ENCODE measurements at regions of chr6 and their contacts with region 1.

Region 1: GRCh38 chr6:112180095-112180820 is 74.1 kb downstream of the LAMA4 start:
- DNase-seq: peak in 1 of 2 donors; percentile 25
- ATAC-seq: peak in 1 of 2 donors; percentile 66
- H3K4me3 ChIP-seq: no peak overlapping the region
- H3K27ac ChIP-seq: no peak overlapping the region
- H3K4me1 ChIP-seq: no peaks in the 10 kb centered on the region
- H3K27me3 ChIP-seq: no peaks in the 10 kb centered on the region
- CTCF ChIP-seq: peak; percentile 59 to 71 (median 66)
- POLR2A ChIP-seq: no peak

Region 2: DNA sequence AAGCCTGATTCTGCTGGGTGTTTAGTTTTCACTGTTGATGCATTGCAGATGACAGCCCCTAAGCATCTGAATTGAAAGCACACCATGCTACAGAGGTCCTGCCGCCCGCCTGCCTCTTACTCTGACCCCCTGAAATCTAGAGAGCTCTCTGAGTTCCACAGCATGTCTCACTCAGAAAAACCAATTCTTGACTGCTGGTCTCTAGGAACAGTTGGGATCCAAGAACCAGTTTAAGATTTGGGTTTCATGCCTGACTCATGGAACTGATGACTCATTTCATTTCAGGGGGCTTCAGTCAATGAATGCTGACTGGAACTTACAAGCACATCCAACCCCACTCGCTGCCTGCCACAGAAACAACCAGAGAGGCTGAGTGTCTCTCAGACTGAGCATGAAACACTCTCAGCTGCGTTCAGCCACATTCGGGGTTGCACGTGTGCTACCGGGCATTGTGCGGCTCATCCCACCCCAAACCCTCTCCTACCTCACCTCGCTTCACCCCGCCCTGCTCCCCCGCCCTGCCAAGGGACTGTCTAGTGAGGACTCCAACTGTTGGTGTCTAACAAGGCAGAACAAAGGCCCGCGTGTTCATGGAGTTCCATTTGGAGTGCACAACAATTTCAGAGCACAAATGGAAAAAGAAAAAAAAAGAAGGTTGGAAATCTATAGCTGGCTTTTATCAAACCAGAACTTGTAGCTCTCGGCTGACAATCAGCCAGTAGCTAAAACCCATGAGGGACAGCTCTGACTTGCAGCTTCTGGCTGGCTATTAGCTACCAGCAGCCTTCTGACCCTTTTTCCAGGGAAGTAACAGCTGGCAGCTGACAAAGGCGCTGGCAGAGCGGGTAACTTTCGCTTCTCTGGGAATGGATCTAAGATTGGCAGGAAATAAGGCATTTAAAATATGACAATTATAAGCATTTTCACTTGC is 554.5 kb before region 1 on chr6:
- in situ Hi-C with region 1: no loop called
- intact Hi-C with region 1: no loop called
- DNase-seq: peak; percentile 55 to 76
- ATAC-seq: peak; percentile 87 to 94
- H3K4me3 ChIP-seq: peak overlapping the region; percentile 40 to 52 (median 48)
- H3K27ac ChIP-seq: peak overlapping the region; percentile 70 to 77 (median 74)
- H3K4me1 ChIP-seq: peaks cover 19 to 38% of the 10 kb centered on the region in 2 donors
- H3K27me3 ChIP-seq: no peaks in the 10 kb centered on the region
- CTCF ChIP-seq: no peak
- POLR2A ChIP-seq: no peak

Region 3: DNA sequence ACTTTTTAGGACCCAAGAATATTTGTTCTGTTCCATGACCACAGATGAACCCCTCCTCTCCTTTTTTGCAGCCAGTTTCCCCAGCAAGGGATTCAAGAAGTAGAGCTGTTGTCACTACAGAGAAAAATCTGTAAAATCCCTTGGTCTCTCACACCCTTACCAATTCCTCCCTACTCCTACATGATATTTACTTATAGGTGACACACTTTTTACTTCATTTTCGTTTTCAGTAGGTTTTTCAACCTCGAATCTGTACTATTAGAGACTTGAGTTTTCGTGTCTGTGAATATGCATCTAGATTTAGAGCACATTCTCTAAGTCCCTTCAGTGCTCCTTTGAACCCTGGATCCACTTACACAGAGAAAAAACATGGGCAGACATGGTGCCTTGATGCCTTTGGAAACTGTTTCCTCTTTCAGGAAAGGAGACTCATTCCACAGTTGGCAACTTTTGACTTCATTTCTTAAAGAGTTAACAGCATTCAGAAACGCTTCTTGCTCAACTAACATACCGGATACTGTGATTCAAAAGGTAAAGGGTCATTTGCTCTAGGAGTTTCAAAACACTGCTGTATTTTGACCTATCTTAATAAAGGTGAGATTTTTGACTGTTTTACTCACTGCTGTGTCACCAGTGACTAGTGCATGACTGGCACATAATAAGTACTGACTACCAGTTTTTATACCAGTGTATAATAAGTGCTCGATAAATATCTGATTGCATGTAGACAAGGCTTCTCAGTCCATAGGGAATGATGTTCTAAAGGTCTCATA is 23.5 kb after region 1 on chr6:
- in situ Hi-C with region 1: no loop called
- intact Hi-C with region 1: no loop called
- DNase-seq: no peak
- ATAC-seq: peak in 1 of 2 donors; percentile 51
- H3K4me3 ChIP-seq: no peak overlapping the region
- H3K27ac ChIP-seq: peak overlapping the region; percentile 41 to 56 (median 48)
- H3K4me1 ChIP-seq: peaks cover 0 to 7% of the 10 kb centered on the region in 2 donors
- H3K27me3 ChIP-seq: no peaks in the 10 kb centered on the region
- CTCF ChIP-seq: no peak
- POLR2A ChIP-seq: no peak

Region 4: DNA sequence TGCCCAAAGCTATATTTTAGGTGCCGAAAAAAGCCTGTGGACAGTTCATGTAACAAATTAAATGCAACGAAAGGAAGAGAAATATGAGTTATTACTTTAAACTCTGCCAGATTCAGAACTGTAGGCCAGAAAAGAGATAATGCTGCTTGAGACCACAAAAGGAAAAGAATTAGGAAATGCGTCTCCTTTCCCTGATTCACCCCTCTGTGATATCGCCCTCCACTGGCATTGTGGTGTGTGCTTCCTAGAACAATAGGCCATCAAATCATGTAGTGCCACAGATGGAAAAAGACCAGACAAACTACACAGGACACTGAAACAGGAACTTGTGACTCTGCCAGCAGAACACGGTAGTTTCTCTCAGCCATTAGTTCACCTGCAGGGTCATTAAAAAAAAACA is 88.9 kb after region 1 on chr6:
- in situ Hi-C with region 1: no loop called
- intact Hi-C with region 1: loop called (anchors 5 kb)
- DNase-seq: no peak
- ATAC-seq: peak in 1 of 2 donors; percentile 46
- H3K4me3 ChIP-seq: no peak overlapping the region
- H3K27ac ChIP-seq: peak overlapping the region; percentile 45 to 63 (median 52)
- H3K4me1 ChIP-seq: peaks cover 0 to 14% of the 10 kb centered on the region in 2 donors
- H3K27me3 ChIP-seq: no peaks in the 10 kb centered on the region
- CTCF ChIP-seq: peak in 1 of 5 experiments; percentile 24
- POLR2A ChIP-seq: no peak

Region 5: DNA sequence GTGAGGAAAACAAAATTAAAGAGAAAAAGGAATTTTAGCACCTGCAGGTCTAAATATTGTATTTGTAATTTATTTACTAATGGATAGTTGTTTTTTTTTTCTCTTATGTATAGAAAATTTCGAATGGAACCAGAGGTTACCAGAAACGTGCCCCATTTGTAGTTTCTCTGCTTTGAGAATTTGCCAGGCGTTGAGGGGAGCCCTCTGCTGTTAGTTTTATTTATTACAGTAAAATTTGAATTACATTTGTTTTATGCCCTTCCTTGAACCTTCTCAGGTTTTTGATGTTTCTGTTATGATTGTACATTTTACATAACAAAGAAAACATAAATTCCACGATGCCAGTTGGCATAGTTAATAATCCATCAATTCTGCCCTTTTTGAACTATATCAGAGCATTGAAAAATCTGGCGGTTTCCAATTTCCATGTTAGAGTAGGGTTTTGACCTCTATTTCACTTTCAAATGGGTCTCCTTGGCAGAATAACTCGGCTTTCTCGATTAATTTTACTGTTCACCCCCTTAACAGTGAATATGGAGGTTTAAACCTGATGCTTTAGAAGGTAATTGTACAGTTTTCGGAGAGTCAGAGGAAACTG is 131.8 kb after region 1 on chr6:
- in situ Hi-C with region 1: loop called (anchors 5 to 10 kb)
- intact Hi-C with region 1: loop called (anchors 1 kb)
- DNase-seq: no peak
- ATAC-seq: no peak
- H3K4me3 ChIP-seq: peak overlapping the region in 1 of 4 donors; percentile 10
- H3K27ac ChIP-seq: no peak overlapping the region
- H3K4me1 ChIP-seq: no peaks in the 10 kb centered on the region
- H3K27me3 ChIP-seq: no peaks in the 10 kb centered on the region
- CTCF ChIP-seq: peak; percentile 36 to 71 (median 41)
- POLR2A ChIP-seq: no peak

Measured in gastrocnemius medialis (tissue), 4 donors.